Activated naive CD4-positive, alpha-beta T cell treated with anti-CD3 and anti-CD28 coated beads for 36 hours (primary cell): ENCODE measurements at regions of chr2 and their contacts with region 1.

Region 1: GRCh38 chr2:98487806-98488651 is 43.4 kb downstream of the INPP4A start:
- DNase-seq: peak; percentile 70
- H3K4me3 Mint-ChIP-seq: no peak overlapping the region
- H3K27ac Mint-ChIP-seq: peak overlapping the region; percentile 20
- H3K4me1 Mint-ChIP-seq: peaks cover 88% of the 10 kb centered on the region
- H3K27me3 Mint-ChIP-seq: no peaks in the 10 kb centered on the region

Region 2: GRCh38 chr2:98444436-98445176 is 43.4 kb before region 1 on chr2 and contains the start of gene INPP4A:
- CTCF ChIA-PET with region 1: interaction called, 14 read pairs
- intact Hi-C with region 1: loop called (anchors 1 kb)
- DNase-seq: peak; percentile 69
- H3K4me3 Mint-ChIP-seq: peak within 1 kb of the TSS; percentile 87
- H3K27ac Mint-ChIP-seq: peak within 1 kb of the TSS; percentile 88
- H3K4me1 Mint-ChIP-seq: peaks cover 38% of the 10 kb centered on the region
- H3K27me3 Mint-ChIP-seq: no peaks in the 10 kb centered on the region
- total RNA-seq, gene INPP4A: 33.1 to 34.8 TPM

Region 3: DNA sequence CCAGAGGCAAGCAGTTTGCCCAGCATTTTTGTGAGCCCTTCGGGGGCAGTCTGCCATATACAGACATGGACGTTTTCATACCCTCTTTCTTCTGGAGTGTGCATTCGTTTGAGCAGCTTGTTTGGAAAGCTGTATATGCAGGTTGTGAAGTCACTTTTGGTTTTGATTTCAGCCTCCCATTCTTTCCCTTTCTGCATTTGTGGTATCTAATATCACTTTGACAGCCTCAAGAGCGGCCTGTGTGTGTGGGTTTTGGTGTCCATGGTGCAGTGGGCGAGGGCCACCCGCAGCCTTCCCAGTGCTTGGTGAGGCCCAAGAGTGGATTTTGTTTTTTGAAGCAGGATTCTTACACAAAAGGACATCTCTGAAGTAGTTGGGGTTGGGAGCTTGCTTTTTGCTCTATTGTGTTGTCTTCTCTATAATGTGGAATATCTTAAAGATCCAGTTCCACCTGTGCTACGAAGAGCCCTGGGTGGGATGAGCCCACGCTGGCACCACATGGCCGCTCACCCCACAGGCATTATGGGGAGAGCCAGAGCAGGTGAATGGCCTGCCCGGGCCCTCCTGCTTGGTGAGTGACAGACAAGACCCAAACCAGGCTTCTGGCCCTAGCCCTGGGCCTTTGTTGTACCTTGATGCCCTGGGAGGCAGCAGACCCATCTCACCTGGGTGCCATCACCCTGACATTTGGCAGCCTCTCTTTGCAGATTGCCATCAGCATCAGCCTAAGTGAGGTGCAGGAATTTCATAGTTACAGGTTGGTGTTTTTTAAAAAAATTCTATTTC is 13.8 kb before region 1 on chr2:
- CTCF ChIA-PET with region 1: interaction called, 19 read pairs
- intact Hi-C with region 1: no loop called
- DNase-seq: peak; percentile 42
- H3K4me3 Mint-ChIP-seq: peak overlapping the region; percentile 61
- H3K27ac Mint-ChIP-seq: peak overlapping the region; percentile 69
- H3K4me1 Mint-ChIP-seq: peaks cover 96% of the 10 kb centered on the region
- H3K27me3 Mint-ChIP-seq: no peaks in the 10 kb centered on the region

Region 4: GRCh38 chr2:98505311-98505808 is 17.3 kb after region 1 on chr2:
- CTCF ChIA-PET with region 1: interaction called, 8 read pairs
- intact Hi-C with region 1: loop called (anchors 2 kb)
- DNase-seq: peak; percentile 59
- H3K4me3 Mint-ChIP-seq: no peak overlapping the region
- H3K27ac Mint-ChIP-seq: peak overlapping the region; percentile 22
- H3K4me1 Mint-ChIP-seq: peaks cover 92% of the 10 kb centered on the region
- H3K27me3 Mint-ChIP-seq: no peaks in the 10 kb centered on the region

Region 5: GRCh38 chr2:98518090-98518489 is 30.1 kb after region 1 on chr2:
- CTCF ChIA-PET with region 1: interaction called, 16 read pairs
- intact Hi-C with region 1: no loop called
- DNase-seq: peak; percentile 78
- H3K4me3 Mint-ChIP-seq: no peak overlapping the region
- H3K27ac Mint-ChIP-seq: no peak overlapping the region
- H3K4me1 Mint-ChIP-seq: peaks cover 47% of the 10 kb centered on the region
- H3K27me3 Mint-ChIP-seq: no peaks in the 10 kb centered on the region